Head of caudate nucleus (tissue), 42 donors: ENCODE measurements at regions of chr2 and their contacts with region 1.

Region 1: GRCh38 chr2:8754106-8754776 is 72.4 kb downstream of the ID2 start:
- DNase-seq: peak in 36 of 42 donors; percentile 9 to 84 (median 60)

Region 2: GRCh38 chr2:8693155-8693821 is 61.0 kb before region 1 on chr2:
- intact Hi-C with region 1: loop called (anchors 10 kb)
- DNase-seq: peak in 36 of 42 donors; percentile 33 to 82 (median 62)

Region 3: DNA sequence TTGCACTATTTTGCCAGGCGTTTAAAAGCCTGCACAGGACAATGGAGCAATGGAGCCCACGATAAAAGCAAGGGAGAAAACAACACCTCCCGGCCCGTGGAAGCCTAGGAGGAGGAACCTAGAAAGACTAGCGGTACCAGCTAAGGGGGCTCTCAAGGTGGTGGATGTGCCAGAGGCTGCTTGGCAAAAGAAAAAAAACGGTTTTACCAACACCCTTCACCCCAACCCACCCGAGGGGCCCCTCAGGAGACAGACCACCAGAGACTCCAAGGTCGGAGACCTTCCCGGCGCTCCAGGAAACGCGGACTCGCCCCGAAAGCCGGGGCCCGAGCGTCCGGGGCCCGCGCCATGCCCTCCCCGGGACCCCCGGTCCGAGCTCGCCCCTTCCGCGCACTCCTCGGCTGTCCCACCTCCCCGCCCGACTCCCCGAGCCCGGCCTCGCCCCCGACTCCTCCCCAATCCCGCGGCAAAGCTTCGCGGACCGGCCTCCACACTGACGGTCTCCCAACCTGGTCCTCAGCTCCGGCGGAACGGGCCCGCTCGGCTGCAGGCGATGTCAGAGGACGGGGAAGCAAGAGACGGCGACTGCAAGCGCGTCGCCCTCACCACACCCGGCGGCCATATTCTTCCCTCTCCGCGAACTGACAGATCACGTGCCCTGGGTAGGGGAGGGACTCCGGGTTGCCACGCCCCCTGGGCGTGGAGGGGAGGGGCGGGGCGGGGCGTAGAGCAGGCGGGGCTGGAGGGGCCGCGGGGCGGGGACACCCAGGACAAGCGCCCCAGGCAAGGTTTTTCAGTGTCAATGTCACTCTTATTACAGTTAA is 82.9 kb after region 1 on chr2 and contains the start of gene KIDINS220:
- intact Hi-C with region 1: loop called (anchors 5 kb)
- DNase-seq: peak; percentile 77 to 97 (median 92)